ENCODE measurements at regions of chr4 and their contacts with region 1.

Region 1: DNA sequence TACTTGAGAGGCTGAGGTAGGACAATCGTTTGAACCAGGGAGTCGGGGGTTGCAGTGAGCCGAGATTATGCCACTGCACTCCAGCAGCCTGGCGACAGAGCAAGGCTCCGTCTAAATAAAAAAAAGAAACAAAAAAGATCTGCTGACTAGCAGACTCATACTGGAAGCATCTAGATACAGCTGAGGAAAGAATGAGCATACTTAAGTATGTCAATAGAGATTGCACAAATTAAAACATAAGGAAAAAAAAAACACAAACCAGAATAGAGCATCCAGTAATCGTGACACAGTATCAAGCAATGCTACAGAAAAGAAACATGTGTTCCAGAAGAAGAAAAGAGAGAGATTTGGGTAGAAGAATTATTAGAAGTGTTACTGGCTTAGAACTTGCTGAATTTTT is 105.5 kb upstream of the SPOCK3 start:
- DNase-seq: no peak
- ATAC-seq: no peak
- H3K4me3 ChIP-seq: no peak overlapping the region
- H3K27ac ChIP-seq: no peak overlapping the region
- H3K4me1 ChIP-seq: no peaks in the 10 kb centered on the region
- H3K27me3 ChIP-seq: no peaks in the 10 kb centered on the region
- CTCF ChIP-seq: no peak

Region 2: DNA sequence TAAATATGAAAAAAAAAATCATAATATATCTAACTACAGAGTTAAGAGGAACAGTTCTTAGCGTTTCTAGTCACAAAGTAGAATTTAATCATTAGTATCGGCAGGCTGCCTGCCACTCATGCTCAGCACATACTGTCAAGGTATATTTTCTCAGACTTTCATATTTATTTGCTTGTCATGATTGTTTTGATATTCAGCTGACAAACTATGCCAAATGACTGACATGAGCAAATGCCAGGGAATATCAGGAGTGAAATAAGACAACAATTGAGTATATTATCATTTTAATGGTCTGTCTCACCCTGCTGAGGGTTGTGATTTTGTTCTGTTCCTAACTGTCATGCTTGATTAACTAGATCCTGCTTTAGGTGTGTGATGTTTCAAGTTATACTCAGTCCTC is 289.5 kb after region 1 on chr4:
- intact Hi-C with region 1: loop called in 1 of 10 experiments (anchors 5 kb)
- DNase-seq: no peak
- ATAC-seq: no peak
- H3K4me3 ChIP-seq: no peak overlapping the region
- H3K27ac ChIP-seq: no peak overlapping the region
- H3K4me1 ChIP-seq: no peaks in the 10 kb centered on the region
- H3K27me3 ChIP-seq: no peaks in the 10 kb centered on the region
- CTCF ChIP-seq: no peak